HEK293 (cell line): ENCODE measurements at regions of chr11 and their contacts with region 1.

Region 1: GRCh38 chr11:31958076-31958735 is 132.7 kb upstream of the RCN1 start:
- H3K4me3 ChIP-seq: no peak overlapping the region
- H3K27ac ChIP-seq: no peak overlapping the region
- H3K4me1 ChIP-seq: no peaks in the 10 kb centered on the region
- CTCF ChIP-seq: no peak

Region 2: GRCh38 chr11:31240338-31240904 is 717.8 kb before region 1 on chr11:
- CTCF ChIA-PET with region 1: interaction called, 61 read pairs
- POLR2A ChIA-PET with region 1: no interaction called
- H3K4me3 ChIP-seq: no peak overlapping the region
- H3K27ac ChIP-seq: no peak overlapping the region
- H3K4me1 ChIP-seq: no peaks in the 10 kb centered on the region
- CTCF ChIP-seq: no peak

Region 3: GRCh38 chr11:31619980-31620379 is 338.2 kb before region 1 on chr11:
- CTCF ChIA-PET with region 1: no interaction called
- POLR2A ChIA-PET with region 1: no interaction called
- H3K4me3 ChIP-seq: no peak overlapping the region
- H3K27ac ChIP-seq: no peak overlapping the region
- H3K4me1 ChIP-seq: no peaks in the 10 kb centered on the region
- CTCF ChIP-seq: no peak

Region 4: DNA sequence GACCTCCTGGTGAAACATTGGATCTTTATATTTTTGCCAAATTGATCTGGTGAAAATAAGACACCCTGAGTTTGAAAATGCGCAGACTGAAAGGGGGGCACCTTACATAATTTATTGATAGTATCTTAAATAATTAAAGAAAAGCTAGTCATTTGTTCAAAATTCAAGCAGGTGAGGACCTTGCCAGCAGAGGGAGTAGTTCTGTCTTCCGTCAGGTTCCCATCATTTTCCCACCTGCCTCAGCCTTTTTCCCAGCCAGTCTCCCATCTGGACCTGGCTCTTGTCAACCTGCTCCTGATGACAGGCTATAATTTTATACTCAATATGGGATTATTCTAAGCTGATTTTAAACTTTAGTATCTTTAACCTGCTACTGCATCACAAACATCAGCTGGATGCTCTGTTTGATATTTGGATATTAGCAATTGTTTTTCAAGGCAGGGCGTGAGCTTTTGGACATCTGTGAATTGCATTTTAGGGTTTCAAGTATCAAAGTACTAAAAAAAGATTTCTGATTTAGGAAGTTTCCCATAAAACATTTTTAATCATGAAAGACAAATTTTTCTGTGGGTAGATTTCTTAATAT is 316.6 kb before region 1 on chr11:
- CTCF ChIA-PET with region 1: interaction called, 20 read pairs
- POLR2A ChIA-PET with region 1: no interaction called
- H3K4me3 ChIP-seq: no peak overlapping the region
- H3K27ac ChIP-seq: no peak overlapping the region
- H3K4me1 ChIP-seq: no peaks in the 10 kb centered on the region
- CTCF ChIP-seq: no peak

Region 5: DNA sequence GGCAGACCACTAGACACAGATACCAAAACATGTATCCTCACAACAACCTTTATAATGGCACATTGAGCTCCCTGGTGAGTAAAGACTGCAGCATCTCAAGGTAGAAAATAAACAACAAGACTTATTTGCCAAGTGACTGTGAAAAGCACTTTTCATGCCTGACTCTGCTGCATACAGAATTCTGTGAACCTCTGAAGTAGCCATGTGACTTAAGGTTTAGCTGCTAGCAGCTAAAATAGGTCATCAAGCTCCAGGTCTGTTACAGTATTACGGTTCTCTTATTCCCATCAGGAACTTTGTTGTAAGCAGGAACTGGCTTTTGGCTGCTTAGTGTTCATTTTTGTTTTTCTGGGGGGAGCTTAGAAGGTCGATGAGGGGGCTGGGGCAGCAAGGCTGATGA is 286.5 kb before region 1 on chr11:
- CTCF ChIA-PET with region 1: no interaction called
- POLR2A ChIA-PET with region 1: no interaction called
- H3K4me3 ChIP-seq: no peak overlapping the region
- H3K27ac ChIP-seq: no peak overlapping the region
- H3K4me1 ChIP-seq: no peaks in the 10 kb centered on the region
- CTCF ChIP-seq: no peak

Region 6: GRCh38 chr11:31844351-31844750 is 113.9 kb before region 1 on chr11:
- CTCF ChIA-PET with region 1: no interaction called
- POLR2A ChIA-PET with region 1: no interaction called
- H3K4me3 ChIP-seq: no peak overlapping the region
- H3K27ac ChIP-seq: no peak overlapping the region
- H3K4me1 ChIP-seq: no peaks in the 10 kb centered on the region
- CTCF ChIP-seq: no peak

Region 7: GRCh38 chr11:31947051-31947769 is 11.0 kb before region 1 on chr11:
- CTCF ChIA-PET with region 1: interaction called, 20 read pairs
- POLR2A ChIA-PET with region 1: no interaction called
- H3K4me3 ChIP-seq: no peak overlapping the region
- H3K27ac ChIP-seq: no peak overlapping the region
- H3K4me1 ChIP-seq: no peaks in the 10 kb centered on the region
- CTCF ChIP-seq: no peak

Region 8: GRCh38 chr11:31974366-31975136 is 16.3 kb after region 1 on chr11:
- CTCF ChIA-PET with region 1: interaction called, 18 read pairs
- POLR2A ChIA-PET with region 1: no interaction called
- H3K4me3 ChIP-seq: no peak overlapping the region
- H3K27ac ChIP-seq: no peak overlapping the region
- H3K4me1 ChIP-seq: no peaks in the 10 kb centered on the region
- CTCF ChIP-seq: no peak

Region 9: DNA sequence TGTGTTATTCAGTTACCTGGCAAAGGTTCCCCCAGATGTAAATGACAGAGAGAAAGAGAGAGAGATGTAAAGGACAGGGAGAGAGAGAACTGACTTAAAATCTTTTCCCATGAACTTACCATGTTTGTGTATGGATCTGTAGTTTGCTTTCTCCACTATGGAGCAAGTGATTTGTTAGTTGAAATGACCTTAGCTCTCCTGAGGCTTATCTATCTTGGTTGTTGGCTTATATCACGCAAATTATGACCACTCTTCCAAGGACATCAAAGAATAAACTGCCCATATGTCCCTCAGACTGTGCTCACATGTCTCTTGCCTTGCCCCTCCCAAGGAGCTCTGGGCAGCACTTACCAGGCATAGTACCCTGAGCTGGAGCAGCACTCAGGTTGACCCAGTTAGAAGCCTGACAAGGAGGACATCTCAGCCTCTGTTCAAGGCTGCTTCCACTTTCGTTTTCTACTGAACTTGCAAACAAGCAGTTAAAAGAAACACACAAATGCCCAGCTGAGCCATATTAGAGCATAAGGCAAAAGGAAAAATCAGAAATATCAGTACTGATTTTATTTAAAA is 37.4 kb after region 1 on chr11:
- CTCF ChIA-PET with region 1: interaction called, 10 read pairs
- POLR2A ChIA-PET with region 1: no interaction called
- H3K4me3 ChIP-seq: no peak overlapping the region
- H3K27ac ChIP-seq: no peak overlapping the region
- H3K4me1 ChIP-seq: no peaks in the 10 kb centered on the region
- CTCF ChIP-seq: no peak

Region 10: DNA sequence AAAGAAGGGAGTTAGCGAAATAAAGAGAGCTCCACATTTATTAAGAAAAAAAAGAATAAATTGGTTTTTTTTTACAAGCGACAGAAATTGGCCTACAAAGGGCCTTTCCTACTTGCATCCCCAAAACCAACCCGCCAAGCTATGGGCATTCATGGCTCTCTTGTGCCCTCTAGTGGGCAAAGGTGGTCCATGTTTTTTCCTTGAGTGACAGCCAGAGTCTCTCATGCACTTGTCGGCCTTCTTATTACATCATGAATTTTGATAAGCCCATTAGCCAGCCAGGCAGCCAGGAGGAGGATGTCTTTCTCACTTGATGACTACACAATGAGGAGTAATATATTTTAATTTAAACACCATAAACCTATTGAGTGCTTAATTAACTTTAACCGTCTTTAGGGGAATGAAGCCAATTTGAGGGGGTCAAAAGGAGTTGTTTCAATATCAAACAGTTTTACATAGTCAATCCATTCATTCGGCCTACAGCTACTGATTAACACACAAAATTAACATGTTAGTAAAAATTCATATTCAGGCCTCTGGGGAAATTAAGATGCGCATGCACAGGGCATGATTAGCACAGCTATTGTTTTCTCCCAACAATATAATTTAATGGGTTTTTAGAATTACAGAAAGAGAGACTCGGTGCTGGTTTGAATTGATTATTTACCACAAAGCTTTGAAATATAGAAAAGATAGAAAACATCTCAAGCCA is 218.2 kb after region 1 on chr11:
- CTCF ChIA-PET with region 1: interaction called, 11 read pairs
- POLR2A ChIA-PET with region 1: no interaction called
- H3K4me3 ChIP-seq: no peak overlapping the region
- H3K27ac ChIP-seq: no peak overlapping the region
- H3K4me1 ChIP-seq: no peaks in the 10 kb centered on the region
- CTCF ChIP-seq: 0 out of 2 replicates have a peak, but pooled peaks have one; percentile 36